Stomach (tissue), 19 donors: ENCODE measurements at regions of chr7 and their contacts with region 1.

Region 1: DNA sequence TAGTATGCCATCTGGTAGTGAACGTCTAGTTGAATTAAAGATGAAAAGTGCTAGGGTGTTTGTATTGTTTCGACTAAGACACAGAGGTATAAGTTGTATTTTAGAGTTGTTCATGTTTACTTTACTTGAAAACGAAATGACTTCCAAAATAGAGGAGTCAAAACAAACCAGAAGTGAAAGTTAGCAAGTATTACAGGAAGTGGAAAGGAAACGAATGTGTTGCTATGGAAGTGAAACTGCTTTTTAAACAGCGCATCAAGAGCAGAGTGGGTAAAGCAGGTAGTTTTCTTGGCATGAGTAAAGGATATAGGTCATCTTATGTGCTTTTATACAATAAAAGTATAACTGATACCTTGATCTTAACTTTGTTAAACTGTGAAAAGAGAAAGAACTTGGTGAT is 20.0 kb upstream of the GALNTL5 start:
- DNase-seq: peak in 1 of 2 donors; percentile 57
- H3K4me3 ChIP-seq: no peak overlapping the region
- H3K27ac ChIP-seq: peak overlapping the region in 2 of 5 donors; percentile 15 to 45
- H3K4me1 ChIP-seq: peaks cover 5 to 30% (median 10%) of the 10 kb centered on the region in 4 donors
- H3K27me3 ChIP-seq: no peaks in the 10 kb centered on the region
- CTCF ChIP-seq: no peak
- EP300 ChIP-seq: no peak
- POLR2A ChIP-seq: no peak

Region 2: GRCh38 chr7:151782598-151783448 is 153.4 kb before region 1 on chr7:
- intact Hi-C with region 1: loop called (anchors 10 kb)
- DNase-seq: peak; percentile 79 to 87
- H3K4me3 ChIP-seq: peak overlapping the region; percentile 19 to 44 (median 28)
- H3K27ac ChIP-seq: peak overlapping the region; percentile 2 to 71 (median 64)
- H3K4me1 ChIP-seq: peaks cover 7 to 14% (median 12%) of the 10 kb centered on the region in 4 donors
- H3K27me3 ChIP-seq: no peaks in the 10 kb centered on the region
- CTCF ChIP-seq: peak in 5 of 7 experiments; percentile 68 to 95 (median 88)
- EP300 ChIP-seq: no peak
- POLR2A ChIP-seq: no peak

Region 3: DNA sequence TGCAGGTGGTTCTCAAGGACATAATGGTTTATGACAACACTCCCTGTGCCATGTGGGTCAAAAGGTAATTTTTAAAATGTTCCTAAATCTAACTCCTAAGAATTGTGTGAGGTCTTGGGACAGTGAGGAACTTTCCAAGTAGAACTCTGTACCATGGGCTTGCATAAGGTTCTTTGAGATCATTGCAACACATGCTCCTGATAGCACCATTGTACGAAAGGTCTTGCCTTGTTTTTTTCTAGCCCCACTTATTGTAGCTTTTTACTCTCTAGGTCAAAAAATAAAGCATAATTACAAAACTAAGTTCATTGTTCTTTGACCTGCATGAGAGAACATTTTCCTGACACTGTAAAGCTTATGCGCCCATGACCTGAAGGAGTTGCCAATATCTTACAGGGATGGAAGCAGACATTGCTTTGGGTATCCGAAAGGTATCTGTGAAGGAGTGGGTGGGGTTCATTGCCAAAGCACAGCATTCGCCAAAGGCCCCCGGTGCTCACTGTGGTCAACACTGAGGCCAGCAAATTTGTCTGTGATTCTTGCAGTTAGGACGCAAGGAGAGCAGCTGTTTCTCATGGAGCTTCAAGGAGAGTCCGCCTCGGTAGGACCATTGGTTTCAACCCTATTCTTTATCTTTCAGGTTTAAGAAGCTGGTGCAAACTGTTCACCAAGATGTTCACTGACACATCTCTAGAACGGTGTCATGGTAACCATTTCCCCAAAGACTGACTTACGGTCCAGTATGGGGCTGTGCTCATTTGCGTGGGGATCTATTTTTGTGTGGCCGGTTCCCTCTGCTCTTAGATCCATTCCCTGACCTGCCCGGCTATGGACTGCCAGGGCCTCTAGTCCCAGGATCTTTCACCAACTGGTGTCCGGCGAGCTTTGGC is 51.6 kb before region 1 on chr7:
- intact Hi-C with region 1: loop called (anchors 5 kb)
- DNase-seq: no peak
- H3K4me3 ChIP-seq: no peak overlapping the region
- H3K27ac ChIP-seq: no peak overlapping the region
- H3K4me1 ChIP-seq: no peaks in the 10 kb centered on the region
- H3K27me3 ChIP-seq: no peaks in the 10 kb centered on the region
- CTCF ChIP-seq: no peak
- EP300 ChIP-seq: no peak
- POLR2A ChIP-seq: no peak